BJ (cell line): ENCODE measurements at regions of chr9 and their contacts with region 1.

Region 1: GRCh38 chr9:129028192-129028957 is at the start of gene SH3GLB2:
- DNase-seq: peak; percentile 46
- H3K4me3 ChIP-seq: peak within 1 kb of the TSS; percentile 56
- H3K27me3 ChIP-seq: no peaks in the 10 kb centered on the region
- CTCF ChIP-seq: peak; percentile 93
- polyA plus RNA-seq, gene SH3GLB2: 39.8 and 52.7 TPM in 2 replicates

Region 2: GRCh38 chr9:129068990-129069861 is 40.9 kb after region 1 on chr9:
- CTCF ChIA-PET with region 1: interaction called, 3 read pairs
- POLR2A ChIA-PET with region 1: interaction called, 10 read pairs
- DNase-seq: no peak
- H3K4me3 ChIP-seq: no peak overlapping the region
- H3K27me3 ChIP-seq: no peaks in the 10 kb centered on the region
- CTCF ChIP-seq: no peak

Region 3: DNA sequence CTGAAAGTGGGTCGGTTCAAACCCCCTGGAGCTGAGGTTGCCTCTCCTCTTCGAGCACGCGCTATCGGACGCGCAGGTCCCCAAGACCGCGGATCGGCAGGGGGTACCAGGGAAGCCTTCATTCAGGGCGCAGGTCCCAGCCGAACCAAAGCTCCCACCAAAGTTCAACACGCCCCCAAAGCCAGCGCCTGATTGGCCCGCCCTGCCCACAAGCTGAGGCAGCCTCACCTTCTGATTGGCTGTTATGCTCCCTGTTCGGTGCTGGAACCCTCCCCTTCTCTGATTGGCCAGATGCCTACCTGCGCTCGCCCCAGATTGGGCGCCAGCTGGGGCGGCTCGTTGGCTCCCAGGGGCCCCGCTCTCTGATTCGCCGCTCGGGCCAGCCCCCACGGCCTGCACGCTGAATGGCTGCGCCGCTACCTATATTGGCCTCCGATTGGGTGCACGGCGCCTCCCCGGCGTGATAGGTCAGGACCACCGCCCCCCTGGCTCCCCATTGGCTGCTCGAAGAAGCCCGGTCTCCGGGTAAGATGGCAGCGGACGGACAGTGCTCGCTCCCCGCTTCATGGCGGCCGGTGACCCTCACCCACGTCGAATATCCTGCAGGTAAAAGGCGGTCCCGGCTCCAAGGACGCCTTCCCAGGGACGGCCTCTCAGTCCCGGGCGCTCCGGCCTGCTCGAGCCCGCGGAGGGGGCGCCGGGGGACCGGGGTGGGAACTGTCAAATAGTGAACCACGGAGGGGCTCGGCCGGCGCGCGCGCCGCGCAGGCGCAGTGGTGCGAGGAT is 52.4 kb after region 1 on chr9 and contains the start of gene DOLPP1:
- CTCF ChIA-PET with region 1: no interaction called
- POLR2A ChIA-PET with region 1: no interaction called
- DNase-seq: peak; percentile 98
- H3K4me3 ChIP-seq: peak within 1 kb of the TSS; percentile 84
- H3K27me3 ChIP-seq: no peaks in the 10 kb centered on the region
- CTCF ChIP-seq: no peak
- polyA plus RNA-seq, gene DOLPP1: 13.7 and 17.6 TPM in 2 replicates